PC-3 (cell line): ENCODE measurements at regions of chr2 and their contacts with region 1.

Region 1: GRCh38 chr2:127324635-127325034 is 30.7 kb upstream of the ERCC3 start:
- DNase-seq: peak; percentile 68
- ATAC-seq: peak; percentile 69
- H3K4me3 ChIP-seq: no peak overlapping the region
- H3K27ac ChIP-seq: no peak overlapping the region
- H3K4me1 ChIP-seq: peaks cover 5% of the 10 kb centered on the region
- H3K27me3 ChIP-seq: no peaks in the 10 kb centered on the region
- CTCF ChIP-seq: peak; percentile 88

Region 2: DNA sequence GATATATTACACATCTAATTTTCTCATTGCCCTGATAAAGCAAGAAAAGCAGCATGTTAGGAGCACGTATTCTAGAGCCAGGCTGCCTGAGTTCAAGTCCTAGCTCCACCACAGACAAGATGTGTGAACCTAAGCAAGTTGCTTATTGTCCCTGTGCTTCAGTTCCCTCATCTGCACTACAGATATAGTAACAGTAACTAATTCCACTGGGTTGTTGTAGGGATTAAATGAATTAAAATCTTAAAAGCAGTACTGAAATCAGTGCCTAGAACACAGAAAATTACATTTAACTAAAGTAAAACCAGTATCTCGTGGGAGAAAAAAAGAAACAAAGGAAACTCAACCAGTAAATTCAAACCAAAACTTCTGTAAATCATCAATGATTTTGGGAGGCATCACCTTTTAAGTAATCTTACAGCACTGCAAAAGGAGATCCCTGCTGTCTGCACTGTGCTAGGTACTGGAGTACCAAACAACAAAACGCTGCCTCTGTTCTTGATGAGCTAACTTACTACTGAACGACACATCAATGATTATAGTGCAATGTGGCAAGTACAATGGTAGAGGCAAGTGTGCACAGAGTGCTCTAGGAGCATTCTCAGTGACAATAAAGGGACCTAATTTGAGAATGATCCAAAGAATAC is 55.2 kb after region 1 on chr2:
- CTCF ChIA-PET with region 1: no interaction called
- POLR2A ChIA-PET with region 1: no interaction called
- intact Hi-C with region 1: loop called (anchors 5 kb)
- DNase-seq: no peak
- ATAC-seq: no peak
- H3K4me3 ChIP-seq: no peak overlapping the region
- H3K27ac ChIP-seq: no peak overlapping the region
- H3K4me1 ChIP-seq: peaks cover 14% of the 10 kb centered on the region
- H3K27me3 ChIP-seq: no peaks in the 10 kb centered on the region
- CTCF ChIP-seq: no peak

Region 3: GRCh38 chr2:127415593-127416505 is 91.2 kb after region 1 on chr2:
- CTCF ChIA-PET with region 1: interaction called, 3 read pairs
- POLR2A ChIA-PET with region 1: interaction called, 4 read pairs
- intact Hi-C with region 1: loop called (anchors 2 kb)
- DNase-seq: peak; percentile 82
- ATAC-seq: peak; percentile 69
- H3K4me3 ChIP-seq: peak overlapping the region; percentile 64
- H3K27ac ChIP-seq: no peak overlapping the region
- H3K4me1 ChIP-seq: peaks cover 41% of the 10 kb centered on the region
- H3K27me3 ChIP-seq: no peaks in the 10 kb centered on the region
- CTCF ChIP-seq: peak; percentile 86

Region 4: GRCh38 chr2:127479219-127479825 is 154.7 kb after region 1 on chr2:
- CTCF ChIA-PET with region 1: interaction called, 4 read pairs
- POLR2A ChIA-PET with region 1: no interaction called
- intact Hi-C with region 1: loop called (anchors 1 kb)
- DNase-seq: peak; percentile 75
- ATAC-seq: peak; percentile 83
- H3K4me3 ChIP-seq: no peak overlapping the region
- H3K27ac ChIP-seq: no peak overlapping the region
- H3K4me1 ChIP-seq: no peaks in the 10 kb centered on the region
- H3K27me3 ChIP-seq: no peaks in the 10 kb centered on the region
- CTCF ChIP-seq: peak; percentile 90